ENCODE measurements at regions of chr17 and their contacts with region 1.

Region 1: DNA sequence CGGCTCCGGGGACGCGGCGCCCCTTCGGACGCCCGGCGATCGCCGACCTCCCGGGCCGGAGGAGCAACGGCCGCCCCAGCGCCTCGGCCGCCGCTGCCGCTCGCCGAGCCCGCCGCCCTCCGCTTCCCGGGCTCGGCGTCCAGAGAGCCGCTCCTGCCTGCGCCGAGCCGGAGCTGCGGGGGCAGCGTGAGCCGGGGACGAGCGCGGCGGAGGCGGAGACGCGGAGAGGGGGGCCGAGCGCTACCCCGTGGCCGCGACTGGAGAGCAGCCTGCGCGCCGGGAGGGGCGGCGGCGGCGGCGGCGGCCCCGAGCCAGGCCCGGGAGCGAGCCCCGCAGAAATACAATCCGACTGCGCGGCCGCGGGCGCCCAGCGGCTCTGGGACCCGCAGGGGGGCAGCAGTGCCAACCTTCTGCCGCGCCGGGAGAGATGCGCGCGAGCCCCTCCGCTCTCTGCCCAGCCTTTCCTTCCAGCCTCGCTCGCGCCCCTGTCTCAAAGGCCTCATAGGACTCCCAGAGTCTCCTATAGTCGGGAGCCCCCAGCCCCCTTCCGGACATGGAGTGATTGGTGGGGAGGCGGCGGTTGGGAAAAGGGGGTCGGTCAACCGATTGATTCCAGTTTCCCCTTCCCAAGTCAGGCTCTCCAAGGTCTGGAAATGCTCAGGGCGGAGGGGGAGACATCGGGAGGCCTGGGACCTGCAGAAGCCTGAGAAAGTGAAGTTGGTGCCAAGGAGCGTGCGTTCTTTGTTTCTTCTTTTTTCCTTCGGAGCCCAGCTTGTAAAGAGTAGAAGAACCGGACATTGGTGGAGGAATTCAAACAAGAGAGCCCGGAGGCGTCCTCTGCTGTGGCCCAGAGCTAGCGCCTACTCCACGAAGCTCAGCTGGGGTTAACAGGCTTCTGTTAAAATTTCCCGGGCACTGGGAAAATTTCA is 1.1 kb upstream of the SDK2 start:
- DNase-seq: peak; percentile 77

Region 2: GRCh38 chr17:72858826-72859495 is 786.4 kb before region 1 on chr17:
- intact Hi-C with region 1: loop called in 1 of 2 experiments (anchors 5 kb)
- DNase-seq: no peak

Region 3: DNA sequence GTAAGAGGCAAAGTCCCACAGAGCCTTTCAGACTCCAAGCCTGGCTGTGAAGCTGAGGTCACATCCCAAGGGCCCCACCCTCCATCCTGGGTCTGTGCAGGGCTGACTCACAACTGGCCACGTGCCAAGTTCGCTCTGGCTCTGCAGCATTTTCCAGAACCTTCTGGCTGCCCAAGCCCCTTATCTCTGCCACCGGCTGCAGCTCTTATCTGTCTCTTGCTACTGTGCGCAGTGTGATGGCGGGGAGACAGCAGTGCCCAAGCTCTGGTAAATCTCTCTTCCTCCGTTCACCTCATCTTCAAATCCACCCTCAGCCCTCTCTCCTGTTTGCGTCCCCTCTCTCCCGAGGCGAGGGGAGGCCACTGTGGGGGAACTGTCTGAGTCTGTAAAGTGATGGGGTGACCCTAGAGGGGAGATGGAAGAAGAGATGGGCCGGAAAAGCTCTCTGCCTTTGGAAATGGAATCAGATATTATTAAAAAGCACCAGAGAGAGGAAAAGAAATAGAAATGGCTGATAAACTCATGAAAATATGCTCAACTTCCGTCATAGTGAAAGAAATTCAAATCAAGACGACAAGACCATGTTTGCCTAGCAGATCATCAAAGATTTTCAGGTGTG is 170.8 kb before region 1 on chr17:
- intact Hi-C with region 1: no loop called
- DNase-seq: peak; percentile 90

Region 4: GRCh38 chr17:74037320-74037719 is 392.0 kb after region 1 on chr17:
- intact Hi-C with region 1: no loop called
- DNase-seq: no peak

Measured in posterior vena cava (tissue), 2 donors.